ENCODE measurements at regions of chr21 and their contacts with region 1.

Region 1: GRCh38 chr21:35075546-35075945 is 26.4 kb upstream of the RUNX1 start:
- DNase-seq: no peak
- H3K4me3 ChIP-seq: no peak overlapping the region
- H3K27ac ChIP-seq: no peak overlapping the region
- H3K4me1 ChIP-seq: no peaks in the 10 kb centered on the region
- H3K27me3 ChIP-seq: no peaks in the 10 kb centered on the region
- CTCF ChIP-seq: no peak
- POLR2A ChIP-seq: no peak

Region 2: GRCh38 chr21:34845521-34846451 is 229.8 kb before region 1 on chr21:
- intact Hi-C with region 1: no loop called
- DNase-seq: no peak
- H3K4me3 ChIP-seq: no peak overlapping the region
- H3K27ac ChIP-seq: peak overlapping the region; percentile 60
- H3K4me1 ChIP-seq: peaks cover 46% of the 10 kb centered on the region
- H3K27me3 ChIP-seq: no peaks in the 10 kb centered on the region
- CTCF ChIP-seq: no peak
- POLR2A ChIP-seq: no peak

Region 3: DNA sequence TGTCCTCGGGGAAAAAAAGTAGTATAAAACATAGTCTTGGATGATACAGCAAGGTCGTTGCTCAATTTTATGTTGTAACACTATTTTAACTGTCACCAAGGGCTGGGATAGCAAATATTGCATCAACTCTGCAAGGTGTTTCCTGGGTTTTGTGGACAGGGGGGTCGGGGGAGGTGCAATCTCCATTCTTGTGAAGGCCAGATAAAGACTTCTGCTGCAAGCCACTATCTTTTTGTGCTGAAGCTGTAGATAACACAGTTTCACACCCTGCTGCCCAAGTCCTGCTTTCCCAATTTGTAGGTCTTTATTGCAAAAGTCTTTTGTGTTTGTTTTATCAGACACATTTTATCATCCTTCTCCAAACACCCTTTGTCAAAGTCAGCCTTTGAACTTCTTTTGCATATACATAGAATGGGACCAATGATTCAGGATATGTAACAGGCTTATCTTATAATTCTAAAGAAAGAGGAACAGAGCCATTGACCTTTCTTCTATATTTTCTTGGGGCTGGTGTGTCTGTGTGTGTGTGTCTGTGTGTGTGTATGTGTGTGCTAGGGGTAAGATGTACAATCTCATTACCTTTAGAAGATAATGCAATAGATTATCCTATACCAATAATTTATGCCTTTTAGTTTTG is 167.0 kb before region 1 on chr21:
- intact Hi-C with region 1: no loop called
- DNase-seq: no peak
- H3K4me3 ChIP-seq: no peak overlapping the region
- H3K27ac ChIP-seq: no peak overlapping the region
- H3K4me1 ChIP-seq: peaks cover 8% of the 10 kb centered on the region
- H3K27me3 ChIP-seq: no peaks in the 10 kb centered on the region
- CTCF ChIP-seq: no peak
- POLR2A ChIP-seq: no peak

Region 4: DNA sequence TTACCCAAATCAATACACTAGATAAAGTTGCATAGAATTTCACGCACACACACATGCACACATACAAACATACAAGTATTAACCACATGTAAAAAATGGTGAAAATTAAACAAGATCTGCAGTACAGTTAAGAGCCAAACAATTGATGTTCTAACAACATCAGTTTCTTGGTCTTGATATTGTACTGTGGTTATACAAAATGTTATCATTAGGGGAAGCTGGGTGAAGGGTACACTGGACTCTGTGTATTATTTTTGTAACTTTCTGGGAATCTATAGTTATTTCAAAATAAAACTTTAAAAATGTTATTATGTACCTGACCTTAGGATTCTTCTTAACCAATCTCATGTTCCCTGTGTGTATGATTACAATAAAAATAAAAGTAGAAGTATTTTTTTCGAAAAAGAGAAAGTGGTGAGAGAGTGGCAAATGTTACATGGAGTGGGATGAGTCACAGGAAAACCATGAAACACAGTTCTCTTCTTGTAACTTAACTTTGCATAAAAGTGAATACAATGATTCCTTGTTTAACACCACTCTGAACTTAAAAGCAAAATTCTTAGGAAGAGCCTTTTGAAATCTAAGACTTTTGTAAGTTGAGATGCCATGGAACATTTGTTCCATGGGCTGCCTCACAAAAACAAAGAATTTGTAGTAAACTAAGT is 75.1 kb after region 1 on chr21:
- intact Hi-C with region 1: no loop called
- DNase-seq: no peak
- H3K4me3 ChIP-seq: no peak overlapping the region
- H3K27ac ChIP-seq: no peak overlapping the region
- H3K4me1 ChIP-seq: no peaks in the 10 kb centered on the region
- H3K27me3 ChIP-seq: no peaks in the 10 kb centered on the region
- CTCF ChIP-seq: no peak
- POLR2A ChIP-seq: no peak

Region 5: GRCh38 chr21:35603494-35603893 is 527.9 kb after region 1 on chr21:
- intact Hi-C with region 1: loop called (anchors 5 kb)
- DNase-seq: no peak
- H3K4me3 ChIP-seq: no peak overlapping the region
- H3K27ac ChIP-seq: no peak overlapping the region
- H3K4me1 ChIP-seq: no peaks in the 10 kb centered on the region
- H3K27me3 ChIP-seq: no peaks in the 10 kb centered on the region
- CTCF ChIP-seq: no peak
- POLR2A ChIP-seq: no peak

Region 6: GRCh38 chr21:36347278-36347961 is 1271.9 kb after region 1 on chr21:
- intact Hi-C with region 1: no loop called
- DNase-seq: no peak
- H3K4me3 ChIP-seq: no peak overlapping the region
- H3K27ac ChIP-seq: no peak overlapping the region
- H3K4me1 ChIP-seq: no peaks in the 10 kb centered on the region
- H3K27me3 ChIP-seq: no peaks in the 10 kb centered on the region
- CTCF ChIP-seq: no peak
- POLR2A ChIP-seq: no peak